Heart left ventricle (tissue), 16 donors: ENCODE measurements at regions of chr17 and their contacts with region 1.

Region 1: GRCh38 chr17:44522883-44523671 is 19.9 kb upstream of the GPATCH8 start:
- DNase-seq: peak; percentile 48 to 81 (median 64)
- ATAC-seq: peak in 3 of 4 donors; percentile 71 to 88 (median 86)
- H3K4me3 ChIP-seq: no peak overlapping the region
- H3K27ac ChIP-seq: no peak overlapping the region
- H3K4me1 ChIP-seq: no peaks in the 10 kb centered on the region
- H3K27me3 ChIP-seq: peaks cover 0 to 22% (median 0%) of the 10 kb centered on the region in 9 donors
- CTCF ChIP-seq: peak; percentile 29 to 65 (median 47)
- POLR2A ChIP-seq: no peak

Region 2: GRCh38 chr17:44385287-44386181 is 137.5 kb before region 1 on chr17:
- intact Hi-C with region 1: loop called in 1 of 10 experiments (anchors 10 kb)
- DNase-seq: peak; percentile 75 to 90 (median 77)
- ATAC-seq: peak; percentile 59 to 91 (median 86)
- H3K4me3 ChIP-seq: peak overlapping the region; percentile 25 to 63 (median 56)
- H3K27ac ChIP-seq: no peak overlapping the region
- H3K4me1 ChIP-seq: peaks cover 0 to 23% (median 13%) of the 10 kb centered on the region in 12 donors
- H3K27me3 ChIP-seq: peaks cover 0 to 21% (median 4%) of the 10 kb centered on the region in 9 donors
- CTCF ChIP-seq: peak in 3 of 12 donors; percentile 20 to 26 (median 21)
- POLR2A ChIP-seq: peak in 1 of 2 donors; percentile 28

Region 3: DNA sequence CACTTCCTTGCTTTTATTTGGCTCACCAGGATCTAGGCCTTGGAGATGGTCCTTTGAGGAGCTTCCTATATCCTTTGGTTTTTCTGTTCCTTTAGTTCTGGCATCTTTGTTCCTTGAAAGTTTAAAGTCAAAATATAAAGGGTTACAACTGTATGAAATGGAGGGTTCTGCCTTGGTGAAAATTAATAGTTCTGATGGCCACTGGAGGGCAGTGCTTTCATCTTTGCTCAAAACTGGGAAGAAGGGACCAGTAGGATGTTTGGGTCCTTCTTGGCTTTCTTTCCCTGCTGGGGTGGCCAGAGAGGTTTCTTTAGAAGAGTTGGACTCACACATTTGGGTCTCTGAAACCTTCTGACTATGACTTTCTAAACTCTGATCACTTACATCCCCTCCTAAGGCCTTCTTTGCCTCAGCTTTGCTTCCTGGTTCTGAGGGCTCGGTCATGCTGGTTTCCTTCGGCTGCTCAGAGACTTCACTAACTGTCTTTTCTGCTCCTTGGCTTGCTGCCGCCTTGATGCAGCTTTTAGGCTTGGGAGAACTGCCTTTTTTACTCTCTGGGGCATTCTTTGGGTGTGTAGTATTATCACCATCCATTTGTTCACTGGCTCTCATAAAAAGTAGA is 122.7 kb before region 1 on chr17:
- intact Hi-C with region 1: loop called in 5 of 10 experiments (anchors 1 to 10 kb)
- DNase-seq: no peak
- ATAC-seq: peak in 1 of 4 donors; percentile 31
- H3K4me3 ChIP-seq: no peak overlapping the region
- H3K27ac ChIP-seq: no peak overlapping the region
- H3K4me1 ChIP-seq: no peaks in the 10 kb centered on the region
- H3K27me3 ChIP-seq: no peaks in the 10 kb centered on the region
- CTCF ChIP-seq: peak in 11 of 12 donors; percentile 8 to 47 (median 33)
- POLR2A ChIP-seq: no peak

Region 4: GRCh38 chr17:44722254-44722653 is 199.2 kb after region 1 on chr17:
- intact Hi-C with region 1: no loop called
- DNase-seq: no peak
- ATAC-seq: no peak
- H3K4me3 ChIP-seq: no peak overlapping the region
- H3K27ac ChIP-seq: no peak overlapping the region
- H3K4me1 ChIP-seq: no peaks in the 10 kb centered on the region
- H3K27me3 ChIP-seq: no peaks in the 10 kb centered on the region
- CTCF ChIP-seq: no peak
- POLR2A ChIP-seq: no peak